ENCODE measurements at regions of chr1 and their contacts with region 1.

Region 1: GRCh38 chr1:243255791-243256512 is at the start of gene SDCCAG8:
- DNase-seq: peak; percentile 83
- ATAC-seq: peak; percentile 80
- H3K4me3 Mint-ChIP-seq: peak within 1 kb of the TSS; percentile 95
- H3K27ac Mint-ChIP-seq: peak within 1 kb of the TSS; percentile 98
- H3K4me1 Mint-ChIP-seq: peaks cover 41% of the 10 kb centered on the region
- H3K27me3 Mint-ChIP-seq: no peaks in the 10 kb centered on the region
- CTCF ChIP-seq: no peak
- total RNA-seq, gene SDCCAG8: 33.4 and 41.2 TPM in 2 replicates

Region 2: DNA sequence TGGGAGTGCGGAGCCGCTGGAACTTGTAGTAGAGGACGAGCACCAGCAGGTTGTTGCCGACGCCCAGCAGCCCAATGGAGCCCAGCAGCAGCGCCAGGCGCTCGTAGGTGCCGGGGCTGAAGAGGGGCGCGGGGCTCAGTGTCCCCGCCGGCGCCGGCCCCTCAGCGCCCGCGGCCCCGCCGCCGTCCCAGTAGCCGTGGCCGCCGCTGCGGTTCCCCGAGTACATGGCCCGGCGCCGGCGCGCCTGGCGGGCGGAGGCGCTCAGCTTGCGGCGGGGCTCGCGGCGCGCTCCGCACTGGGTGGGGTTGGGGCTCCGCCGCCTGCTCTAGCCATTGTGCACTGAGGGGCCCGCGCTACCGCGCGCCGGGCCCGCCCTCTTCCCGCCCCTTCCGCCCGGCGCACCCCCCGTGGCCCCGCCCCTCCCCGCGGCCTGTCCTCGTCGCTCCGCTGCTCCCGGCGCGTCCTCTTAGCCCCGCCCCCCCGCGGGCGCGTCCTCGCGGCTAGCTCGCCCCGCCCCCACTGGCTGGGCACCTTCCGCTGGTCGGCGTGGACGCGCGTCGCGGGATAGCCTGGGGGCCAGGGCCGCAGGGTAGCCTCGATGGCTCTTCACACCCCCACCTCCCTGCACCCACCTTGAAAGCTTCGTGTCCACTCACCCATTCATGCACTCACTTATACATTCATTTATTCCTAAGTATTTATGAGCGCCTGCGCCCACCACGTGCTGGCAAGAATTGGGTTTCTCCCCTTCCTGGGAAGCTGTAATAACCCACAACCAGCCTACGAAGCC is 1615.7 kb before region 1 on chr1 and contains the starts of genes CHML and OPN3:
- CTCF ChIA-PET with region 1: no interaction called
- POLR2A ChIA-PET with region 1: no interaction called
- intact Hi-C with region 1: loop called (anchors 5 kb)
- DNase-seq: peak; percentile 96
- ATAC-seq: peak; percentile 95
- H3K4me3 Mint-ChIP-seq: peak within 1 kb of the TSS; percentile 93
- H3K27ac Mint-ChIP-seq: peak within 1 kb of the TSS; percentile 91
- H3K4me1 Mint-ChIP-seq: peaks cover 55% of the 10 kb centered on the region
- H3K27me3 Mint-ChIP-seq: no peaks in the 10 kb centered on the region
- CTCF ChIP-seq: no peak
- total RNA-seq, gene CHML: 28.3 and 35.2 TPM in 2 replicates
- total RNA-seq, gene OPN3: 31.5 and 32.1 TPM in 2 replicates

Region 3: DNA sequence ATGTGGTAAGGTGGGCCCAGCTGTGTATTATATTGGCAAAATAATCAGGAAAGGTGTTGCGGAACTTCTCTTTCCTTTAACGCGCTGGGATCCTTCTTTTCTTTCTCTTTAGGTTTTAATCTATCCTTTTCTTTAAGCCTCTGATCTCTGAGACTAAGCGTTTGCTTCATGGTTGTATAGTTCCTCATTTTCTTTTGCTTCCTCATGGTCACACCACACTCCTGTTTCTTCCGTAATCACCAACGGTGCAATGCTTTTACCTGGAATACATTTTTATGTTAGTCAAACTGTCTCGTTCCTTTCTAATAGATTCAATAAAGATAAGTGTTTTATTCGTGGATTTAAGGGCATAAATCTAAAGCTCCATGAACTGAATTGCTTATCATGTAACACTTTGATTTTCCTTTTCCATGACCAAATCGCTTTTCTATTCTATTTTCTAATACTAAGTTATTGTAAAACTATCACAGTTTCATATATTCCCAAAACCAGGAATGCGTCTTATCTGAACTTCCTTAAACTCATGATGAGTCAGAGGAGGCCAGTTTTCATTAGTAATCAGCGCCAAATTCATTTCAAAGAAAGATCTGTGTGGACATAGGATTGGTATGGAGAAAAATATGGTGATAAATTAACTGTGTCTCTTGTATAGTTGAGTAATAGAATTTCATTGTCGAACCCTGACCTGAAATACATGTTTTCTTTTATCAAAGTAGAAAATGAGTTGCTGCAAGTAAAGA is 12.1 kb after region 1 on chr1:
- CTCF ChIA-PET with region 1: no interaction called
- POLR2A ChIA-PET with region 1: interaction called, 24 read pairs
- intact Hi-C with region 1: loop called (anchors 1 kb)
- DNase-seq: no peak
- ATAC-seq: peak; percentile 51
- H3K4me3 Mint-ChIP-seq: peak overlapping the region; percentile 63
- H3K27ac Mint-ChIP-seq: peak overlapping the region; percentile 47
- H3K4me1 Mint-ChIP-seq: peaks cover 46% of the 10 kb centered on the region
- H3K27me3 Mint-ChIP-seq: no peaks in the 10 kb centered on the region
- CTCF ChIP-seq: no peak

Region 4: GRCh38 chr1:243312952-243313634 is 57.1 kb after region 1 on chr1:
- CTCF ChIA-PET with region 1: no interaction called
- POLR2A ChIA-PET with region 1: interaction called, 45 read pairs
- intact Hi-C with region 1: loop called (anchors 1 kb)
- DNase-seq: no peak
- ATAC-seq: peak; percentile 72
- H3K4me3 Mint-ChIP-seq: peak overlapping the region; percentile 71
- H3K27ac Mint-ChIP-seq: peak overlapping the region; percentile 88
- H3K4me1 Mint-ChIP-seq: peaks cover 31% of the 10 kb centered on the region
- H3K27me3 Mint-ChIP-seq: no peaks in the 10 kb centered on the region
- CTCF ChIP-seq: no peak

Region 5: DNA sequence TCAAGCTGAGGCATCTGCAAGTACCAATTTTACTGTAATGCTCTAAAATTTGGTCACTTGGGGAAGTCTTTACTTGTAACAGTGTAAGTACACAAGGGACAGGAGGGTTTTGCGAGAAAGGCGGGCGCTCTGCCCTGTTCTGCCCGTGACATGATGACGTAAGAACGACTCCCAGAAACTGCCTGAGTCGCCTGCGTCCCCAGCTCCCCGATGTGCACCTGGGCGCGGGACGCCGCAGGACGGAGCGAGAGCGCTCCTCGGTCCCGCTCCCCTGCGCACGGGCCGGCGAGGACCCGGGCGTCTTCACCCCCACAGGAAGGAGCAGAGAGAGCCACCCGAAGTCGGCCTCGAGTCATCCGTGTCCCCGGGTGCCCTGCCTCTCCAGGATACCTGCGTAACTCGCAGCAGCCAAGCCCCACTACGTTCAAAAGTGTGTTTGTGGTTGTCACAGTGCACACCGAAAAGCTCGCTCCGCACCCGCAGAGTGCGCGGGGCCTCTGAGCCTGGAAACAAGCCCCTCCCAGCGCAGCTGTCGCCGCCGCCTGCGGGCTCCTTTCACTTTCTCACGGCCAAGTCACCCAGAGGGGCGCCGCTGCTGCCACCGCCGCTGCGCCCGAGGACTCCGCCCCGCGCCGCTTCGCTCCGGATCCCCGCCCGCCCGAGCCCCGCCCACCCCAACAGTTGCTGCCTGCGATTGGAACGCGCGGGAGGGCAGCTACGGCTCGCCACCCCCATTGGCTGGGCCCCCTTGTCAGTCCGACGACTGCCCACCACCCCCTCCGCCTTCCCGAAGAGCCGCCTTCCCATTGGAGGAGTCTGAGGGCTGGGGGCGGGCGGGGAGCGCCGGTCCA is 791.9 kb after region 1 on chr1:
- CTCF ChIA-PET with region 1: no interaction called
- POLR2A ChIA-PET with region 1: interaction called, 14 read pairs
- intact Hi-C with region 1: loop called (anchors 1 kb)
- DNase-seq: peak; percentile 84
- ATAC-seq: peak; percentile 83
- H3K4me3 Mint-ChIP-seq: peak overlapping the region; percentile 97
- H3K27ac Mint-ChIP-seq: peak overlapping the region; percentile 99
- H3K4me1 Mint-ChIP-seq: peaks cover 22% of the 10 kb centered on the region
- H3K27me3 Mint-ChIP-seq: no peaks in the 10 kb centered on the region
- CTCF ChIP-seq: no peak

Region 6: DNA sequence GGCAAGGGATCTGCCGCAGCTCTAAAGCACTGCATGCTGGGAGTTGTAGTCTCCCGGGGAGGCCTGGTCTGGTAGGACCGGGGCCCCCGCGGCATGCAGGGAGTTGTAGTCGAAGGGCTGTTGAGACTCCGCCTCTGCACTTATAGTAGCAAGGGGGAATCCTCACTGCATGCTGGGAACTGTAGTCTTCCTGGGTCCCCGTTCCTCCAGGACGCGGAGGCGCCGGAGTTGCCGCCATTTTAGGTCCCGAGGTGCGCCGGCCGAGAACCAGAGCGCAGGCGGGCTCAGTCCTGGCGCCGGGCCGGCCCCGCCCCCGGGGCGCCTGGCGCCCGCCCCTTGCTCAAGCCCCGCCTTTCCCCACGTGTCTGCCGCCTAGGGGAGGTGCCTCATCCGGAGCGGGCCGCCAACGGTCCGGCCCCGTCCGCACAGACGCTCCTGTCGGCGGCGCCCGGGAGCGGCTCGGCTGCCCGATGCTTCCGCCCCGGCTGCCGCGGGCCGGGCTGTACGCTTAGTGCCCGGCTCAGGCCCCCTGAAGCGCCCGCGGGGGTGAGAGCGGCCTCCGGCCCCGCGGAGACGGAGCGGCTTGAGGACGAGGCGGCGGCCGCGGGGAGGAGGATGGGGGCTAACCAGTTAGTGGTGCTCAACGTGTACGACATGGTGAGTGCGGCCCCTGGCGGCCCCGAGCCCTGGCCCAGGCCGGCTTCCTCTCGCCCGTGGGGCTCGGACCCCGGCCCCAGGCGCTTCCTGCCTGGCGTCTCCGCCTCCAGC is 1396.9 kb after region 1 on chr1 and contains the start of gene DESI2:
- CTCF ChIA-PET with region 1: no interaction called
- POLR2A ChIA-PET with region 1: no interaction called
- intact Hi-C with region 1: loop called (anchors 1 kb)
- DNase-seq: peak; percentile 98
- ATAC-seq: peak; percentile 91
- H3K4me3 Mint-ChIP-seq: peak within 1 kb of the TSS; percentile 86
- H3K27ac Mint-ChIP-seq: peak within 1 kb of the TSS; percentile 88
- H3K4me1 Mint-ChIP-seq: peaks cover 18% of the 10 kb centered on the region
- H3K27me3 Mint-ChIP-seq: no peaks in the 10 kb centered on the region
- CTCF ChIP-seq: no peak
- total RNA-seq, gene DESI2: 24.2 and 25.8 TPM in 2 replicates

Measured in activated B cell treated with CpG ODN at 0.5 μM for 24 hours (primary cell).